HEK293 (cell line): ENCODE measurements at regions of chr10 and their contacts with region 1.

Region 1: GRCh38 chr10:95339863-95340262 is 49.1 kb upstream of the PDLIM1 start:
- H3K4me3 ChIP-seq: no peak overlapping the region
- H3K27ac ChIP-seq: no peak overlapping the region
- H3K4me1 ChIP-seq: no peaks in the 10 kb centered on the region
- CTCF ChIP-seq: no peak

Region 2: GRCh38 chr10:95295031-95295755 is 44.7 kb before region 1 on chr10:
- CTCF ChIA-PET with region 1: interaction called, 10 read pairs
- POLR2A ChIA-PET with region 1: no interaction called
- H3K4me3 ChIP-seq: no peak overlapping the region
- H3K27ac ChIP-seq: peak overlapping the region; percentile 2; the same call in 1 of the 2 replicates
- H3K4me1 ChIP-seq: peaks cover 3% of the 10 kb centered on the region
- CTCF ChIP-seq: no peak